ENCODE measurements at regions of chr3 and their contacts with region 1.

Region 1: GRCh38 chr3:40191850-40192448 is 117.6 kb upstream of the EIF1B start:
- DNase-seq: peak; percentile 40
- ATAC-seq: peak; percentile 91
- H3K4me3 ChIP-seq: no peak overlapping the region
- H3K27ac ChIP-seq: no peak overlapping the region
- H3K4me1 ChIP-seq: peaks cover 0 to 5% of the 10 kb centered on the region in 2 experiments; a peak in 1 of 4 replicates
- H3K27me3 ChIP-seq: 0 out of 2 replicates have a peak, but pooled peaks cover 7% of the 10 kb centered on the region
- CTCF ChIP-seq: peak; percentile 75 to 91 (median 76); a peak in 5 of 6 replicates
- POLR2A ChIP-seq: no peak
- RAD21 ChIP-seq: peak; percentile 82

Region 2: GRCh38 chr3:40309418-40309924 is 117.5 kb after region 1 on chr3 and contains the start of gene EIF1B:
- CTCF ChIA-PET with region 1: interaction called, 32 read pairs
- POLR2A ChIA-PET with region 1: interaction called, 9 read pairs
- RAD21 ChIA-PET with region 1: interaction called in 1 of 2 experiments, 3 read pairs
- intact Hi-C with region 1: loop called (anchors 2 kb)
- DNase-seq: peak; percentile 92
- ATAC-seq: peak; percentile 94
- H3K4me3 ChIP-seq: peak within 1 kb of the TSS; percentile 81 to 89
- H3K27ac ChIP-seq: peak within 1 kb of the TSS; percentile 75
- H3K4me1 ChIP-seq: peaks cover 0 to 14% of the 10 kb centered on the region in 2 experiments; a peak in 2 of 4 replicates
- H3K27me3 ChIP-seq: no peaks in the 10 kb centered on the region
- CTCF ChIP-seq: peak; percentile 81 to 89 (median 85)
- POLR2A ChIP-seq: peak; percentile 63
- RAD21 ChIP-seq: peak; percentile 27; the same call in 1 of the 2 replicates
- total RNA-seq, gene EIF1B: 33.6 TPM

Region 3: GRCh38 chr3:40432793-40433192 is 240.8 kb after region 1 on chr3:
- CTCF ChIA-PET with region 1: no interaction called
- POLR2A ChIA-PET with region 1: no interaction called
- RAD21 ChIA-PET with region 1: no interaction called
- intact Hi-C with region 1: loop called (anchors 10 kb)
- DNase-seq: no peak
- ATAC-seq: no peak
- H3K4me3 ChIP-seq: no peak overlapping the region
- H3K27ac ChIP-seq: no peak overlapping the region
- H3K4me1 ChIP-seq: no peaks in the 10 kb centered on the region
- H3K27me3 ChIP-seq: no peaks in the 10 kb centered on the region
- CTCF ChIP-seq: peak in 1 of 3 experiments; percentile 20; a peak in 2 of 6 replicates
- POLR2A ChIP-seq: no peak
- RAD21 ChIP-seq: peak; percentile 51; the same call in 1 of the 2 replicates

Region 4: DNA sequence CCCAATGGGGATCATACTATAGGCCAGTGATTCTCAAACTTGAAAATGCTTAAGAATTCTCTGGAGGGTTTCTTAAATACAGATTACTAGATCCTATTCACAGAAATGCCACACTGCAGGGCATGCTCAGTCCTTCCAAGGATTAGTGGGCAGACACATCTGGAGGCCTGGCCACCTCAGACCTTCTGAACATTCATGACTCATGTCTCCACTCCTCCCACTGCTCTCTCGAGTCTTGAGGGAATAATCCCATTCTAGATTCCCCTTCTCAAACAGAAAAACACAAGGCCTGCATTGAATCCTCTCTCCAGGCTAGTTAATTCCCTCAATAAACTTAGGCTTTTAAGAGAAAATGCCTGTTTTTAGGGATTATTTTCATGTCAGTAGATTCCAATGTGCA is 354.9 kb after region 1 on chr3:
- CTCF ChIA-PET with region 1: no interaction called
- POLR2A ChIA-PET with region 1: no interaction called
- RAD21 ChIA-PET with region 1: no interaction called
- intact Hi-C with region 1: loop called (anchors 10 kb)
- DNase-seq: no peak
- ATAC-seq: peak; percentile 67
- H3K4me3 ChIP-seq: no peak overlapping the region
- H3K27ac ChIP-seq: no peak overlapping the region
- H3K4me1 ChIP-seq: peaks cover 0 to 5% of the 10 kb centered on the region in 2 experiments; a peak in 1 of 4 replicates
- H3K27me3 ChIP-seq: no peaks in the 10 kb centered on the region
- CTCF ChIP-seq: no peak
- POLR2A ChIP-seq: no peak
- RAD21 ChIP-seq: no peak

Region 5: DNA sequence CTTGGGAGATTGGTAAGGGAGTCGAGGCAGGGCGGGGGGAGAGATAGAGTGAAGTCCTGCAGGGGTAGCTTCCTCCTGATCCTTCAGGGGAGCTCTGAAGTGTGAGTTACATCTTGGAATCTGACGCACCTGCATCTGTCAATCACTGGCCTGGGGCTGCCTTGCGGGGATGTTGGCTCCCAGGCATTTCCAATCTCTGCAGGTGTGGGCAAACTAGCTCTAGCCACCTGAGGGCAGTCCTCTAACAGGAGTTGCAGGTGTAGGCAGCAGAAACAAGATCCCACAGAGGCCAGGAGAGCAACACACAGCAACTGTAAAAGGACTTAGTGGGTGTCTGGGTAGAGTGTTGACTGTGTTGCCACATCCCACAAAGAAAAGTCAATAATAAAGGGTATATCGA is 396.5 kb after region 1 on chr3:
- CTCF ChIA-PET with region 1: no interaction called
- POLR2A ChIA-PET with region 1: no interaction called
- RAD21 ChIA-PET with region 1: no interaction called
- intact Hi-C with region 1: no loop called
- DNase-seq: no peak
- ATAC-seq: 0 out of 2 replicates have a peak, but pooled peaks have one; percentile 41
- H3K4me3 ChIP-seq: no peak overlapping the region
- H3K27ac ChIP-seq: no peak overlapping the region
- H3K4me1 ChIP-seq: no peaks in the 10 kb centered on the region
- H3K27me3 ChIP-seq: no peaks in the 10 kb centered on the region
- CTCF ChIP-seq: peak; percentile 10 to 30 (median 13); a peak in 2 of 6 replicates
- POLR2A ChIP-seq: no peak
- RAD21 ChIP-seq: peak; percentile 68